Tibial artery (tissue), 4 donors: ENCODE measurements at regions of chr2 and their contacts with region 1.

Region 1: DNA sequence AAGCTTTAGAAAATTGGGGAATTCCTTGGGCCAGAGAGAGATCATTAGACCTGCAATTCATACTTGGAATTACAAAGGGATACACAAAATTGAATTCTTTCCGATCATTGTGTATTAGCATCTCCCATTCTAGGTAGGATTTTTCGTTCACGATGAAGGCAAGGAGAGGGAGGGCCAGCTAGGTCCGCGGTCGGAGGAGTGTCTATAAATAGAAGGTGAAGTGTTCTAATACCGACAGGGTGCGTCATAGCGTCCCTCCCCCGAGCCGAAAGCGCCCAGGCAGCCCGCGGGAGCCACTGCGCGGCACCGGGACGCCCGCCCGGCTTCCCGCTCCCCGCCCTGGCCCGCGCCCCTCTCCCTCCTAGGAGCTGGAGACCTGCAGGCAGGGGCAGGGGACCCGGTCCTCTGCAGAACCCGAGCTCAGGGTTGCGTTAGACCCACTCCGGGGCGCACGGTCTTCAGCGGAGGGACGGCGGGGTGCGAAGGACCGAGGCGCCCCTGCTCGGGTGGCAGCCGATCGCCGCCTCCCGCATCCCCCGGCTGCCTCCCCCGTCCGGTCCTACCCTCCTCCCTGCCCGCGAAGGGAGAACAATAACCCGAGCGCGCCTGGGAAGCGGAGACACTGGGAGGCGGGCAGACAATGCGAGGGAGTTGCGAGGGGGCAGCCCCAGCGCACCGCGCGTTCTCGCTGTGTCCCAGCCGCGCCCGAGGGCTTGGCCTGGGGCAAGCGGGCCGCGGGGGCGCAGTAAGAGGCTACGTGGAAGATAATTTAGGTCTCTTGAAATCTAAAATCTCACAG is 114.2 kb upstream of the SERTAD2 start:
- DNase-seq: peak; percentile 90 to 94
- H3K4me3 ChIP-seq: peak overlapping the region; percentile 85
- H3K27ac ChIP-seq: peak overlapping the region; percentile 97 to 100
- H3K4me1 ChIP-seq: peaks cover 0 to 12% (median 0%) of the 10 kb centered on the region in 4 donors
- H3K27me3 ChIP-seq: no peaks in the 10 kb centered on the region
- CTCF ChIP-seq: no peak

Region 2: GRCh38 chr2:64644177-64645004 is 123.5 kb before region 1 on chr2:
- intact Hi-C with region 1: loop called (anchors 5 kb)
- DNase-seq: peak; percentile 84 to 85
- H3K4me3 ChIP-seq: peak overlapping the region; percentile 51 to 56
- H3K27ac ChIP-seq: peak overlapping the region; percentile 73 to 76
- H3K4me1 ChIP-seq: peaks cover 0 to 54% (median 32%) of the 10 kb centered on the region in 4 donors
- H3K27me3 ChIP-seq: no peaks in the 10 kb centered on the region
- CTCF ChIP-seq: no peak

Region 3: DNA sequence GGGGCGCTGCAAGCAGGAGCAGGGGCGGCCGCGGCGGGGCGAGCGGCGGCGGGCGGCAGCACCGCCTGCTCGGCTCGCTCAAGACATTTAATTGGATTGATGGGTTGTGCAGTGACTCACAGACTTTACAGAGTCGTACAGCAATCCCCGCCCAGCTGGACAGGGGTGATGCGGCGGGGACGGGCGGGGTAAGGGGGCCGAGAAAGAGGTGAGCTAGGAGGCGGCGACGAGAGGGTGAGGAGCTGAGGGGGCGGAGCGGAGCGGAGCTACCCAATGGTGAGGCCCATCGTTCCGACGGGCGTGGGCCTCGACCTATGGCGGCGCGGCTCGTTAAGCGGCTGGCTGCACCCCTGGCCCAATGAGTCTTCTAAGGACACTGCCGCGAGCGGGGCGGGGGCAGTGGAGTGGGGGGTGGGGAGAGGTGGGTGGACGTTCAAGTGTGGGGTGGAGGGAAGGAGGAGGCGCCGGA is 17.0 kb before region 1 on chr2:
- intact Hi-C with region 1: loop called (anchors 2 kb)
- DNase-seq: peak; percentile 99 to 100
- H3K4me3 ChIP-seq: peak overlapping the region; percentile 69 to 89
- H3K27ac ChIP-seq: peak overlapping the region; percentile 95 to 97
- H3K4me1 ChIP-seq: peaks cover 0 to 35% (median 20%) of the 10 kb centered on the region in 4 donors
- H3K27me3 ChIP-seq: no peaks in the 10 kb centered on the region
- CTCF ChIP-seq: no peak

Region 4: GRCh38 chr2:64831134-64831976 is 63.5 kb after region 1 on chr2:
- intact Hi-C with region 1: loop called (anchors 10 kb)
- DNase-seq: peak; percentile 92 to 93
- H3K4me3 ChIP-seq: no peak overlapping the region
- H3K27ac ChIP-seq: peak overlapping the region; percentile 52 to 63
- H3K4me1 ChIP-seq: peaks cover 0 to 9% (median 6%) of the 10 kb centered on the region in 4 donors
- H3K27me3 ChIP-seq: no peaks in the 10 kb centered on the region
- CTCF ChIP-seq: peak; percentile 55 to 70